ENCODE measurements at regions of chr17 and their contacts with region 1.

Region 1: GRCh38 chr17:19447085-19447583 is 36.1 kb downstream of the RNF112 start:
- DNase-seq: peak; percentile 66
- ATAC-seq: peak; percentile 72
- H3K4me3 ChIP-seq: no peak overlapping the region
- H3K27ac ChIP-seq: no peak overlapping the region
- H3K4me1 ChIP-seq: peaks cover 23% of the 10 kb centered on the region
- H3K27me3 ChIP-seq: peaks cover 0 to 1% of the 10 kb centered on the region in 2 experiments; a peak in 3 of 5 replicates
- CTCF ChIP-seq: peak; percentile 84
- EP300 ChIP-seq: peak in 1 of 2 experiments; percentile 40; a peak in 1 of 4 replicates
- POLR2A ChIP-seq: no peak
- RAD21 ChIP-seq: peak; percentile 79

Region 2: DNA sequence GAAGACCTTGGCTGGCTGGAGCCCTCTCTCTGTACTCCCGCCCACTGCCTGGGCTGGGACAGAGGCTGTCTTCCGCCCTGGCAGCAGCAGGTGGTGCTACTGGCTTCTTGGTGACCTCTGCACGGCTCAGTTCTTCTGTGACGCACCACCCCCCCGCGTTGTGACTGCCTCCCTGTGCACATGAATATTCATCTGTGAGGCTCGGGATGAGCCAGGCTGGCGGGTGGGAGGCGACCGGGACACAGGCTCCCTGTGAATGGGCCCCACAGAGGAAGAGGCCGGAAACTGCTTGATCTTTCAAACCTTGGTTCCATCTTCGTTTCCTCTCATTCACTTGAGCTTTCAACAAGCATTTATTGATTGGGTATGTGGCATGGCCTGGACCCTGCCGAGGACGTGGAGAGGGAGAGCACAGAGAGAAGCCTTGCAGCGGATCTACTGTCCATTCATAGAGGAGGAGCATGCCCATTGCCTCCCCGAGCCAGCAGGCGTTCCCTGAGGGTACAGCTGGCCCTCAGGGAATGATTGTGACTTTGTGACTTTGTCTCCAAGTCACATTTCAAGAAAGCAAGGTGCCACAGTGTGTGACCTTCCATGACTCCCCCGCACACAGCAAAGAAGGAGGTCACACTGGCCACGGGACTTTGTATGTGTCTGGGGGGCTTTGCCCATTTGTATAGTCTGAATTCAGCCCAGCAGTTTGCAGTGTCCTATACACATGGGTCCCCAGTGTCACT is 129.6 kb before region 1 on chr17:
- CTCF ChIA-PET with region 1: interaction called, 7 read pairs
- POLR2A ChIA-PET with region 1: no interaction called
- in situ Hi-C with region 1: no loop called
- intact Hi-C with region 1: loop called (anchors 5 kb)
- DNase-seq: peak; percentile 89
- ATAC-seq: peak; percentile 98
- H3K4me3 ChIP-seq: peak overlapping the region in 1 of 3 experiments; percentile 35; a peak in 2 of 6 replicates
- H3K27ac ChIP-seq: peak overlapping the region; percentile 75
- H3K4me1 ChIP-seq: peaks cover 19% of the 10 kb centered on the region
- H3K27me3 ChIP-seq: no peaks in the 10 kb centered on the region
- CTCF ChIP-seq: peak; percentile 97
- EP300 ChIP-seq: no peak
- POLR2A ChIP-seq: peak; percentile 34 to 36; a peak in 1 of 4 replicates
- RAD21 ChIP-seq: peak; percentile 95

Region 3: DNA sequence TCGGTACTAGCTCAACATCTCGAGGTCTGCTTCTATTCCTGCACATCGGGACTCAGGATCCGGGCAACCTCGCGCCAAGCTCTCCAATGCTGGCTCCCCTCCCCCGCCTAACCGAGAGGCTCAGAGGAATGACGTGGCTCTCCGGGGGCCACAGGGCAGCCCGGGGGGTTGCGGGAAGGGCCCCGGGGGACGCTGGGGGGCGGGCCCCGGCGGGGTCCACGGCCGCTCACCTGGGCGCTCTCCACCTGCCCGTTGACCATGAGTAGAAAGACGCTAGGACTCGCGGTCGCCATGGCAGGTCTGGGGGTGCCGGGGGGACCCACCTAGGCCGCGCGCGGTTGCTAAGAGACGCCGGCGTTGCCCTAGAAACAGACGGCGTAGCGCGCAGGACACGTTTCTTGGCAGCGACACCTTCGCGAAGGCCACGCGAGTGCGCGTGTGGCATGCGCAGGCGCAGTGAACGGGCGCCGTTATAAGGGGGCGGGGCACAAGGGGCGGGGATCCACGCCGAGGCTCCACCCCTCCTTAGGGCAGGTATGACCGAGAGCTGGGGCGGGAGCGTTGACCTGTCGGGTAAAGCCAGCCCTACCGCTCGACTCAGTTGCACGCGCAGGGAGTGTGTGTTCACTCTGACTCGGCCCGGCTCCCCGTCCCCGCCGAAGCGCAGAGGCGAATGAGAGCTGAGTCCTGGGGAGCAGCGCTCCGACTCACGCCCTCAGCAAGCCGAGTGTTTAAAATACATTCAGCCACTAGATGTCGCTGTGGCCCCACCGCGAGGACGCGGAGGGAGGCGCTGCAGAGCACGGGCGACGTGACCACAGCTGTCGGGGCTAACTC is 84.6 kb before region 1 on chr17 and contains the start of gene B9D1:
- CTCF ChIA-PET with region 1: interaction called, 57 read pairs
- POLR2A ChIA-PET with region 1: interaction called, 10 read pairs
- in situ Hi-C with region 1: loop called (anchors 5 kb)
- intact Hi-C with region 1: loop called (anchors 1 kb)
- DNase-seq: peak; percentile 77
- ATAC-seq: peak; percentile 74
- H3K4me3 ChIP-seq: peak within 1 kb of the TSS; percentile 65 to 93 (median 74)
- H3K27ac ChIP-seq: peak within 1 kb of the TSS; percentile 74
- H3K4me1 ChIP-seq: peaks cover 58% of the 10 kb centered on the region
- H3K27me3 ChIP-seq: no peaks in the 10 kb centered on the region
- CTCF ChIP-seq: peak; percentile 100
- EP300 ChIP-seq: no peak; a peak in 1 of 4 replicates
- POLR2A ChIP-seq: peak in 1 of 2 experiments; percentile 72; a peak in 3 of 4 replicates
- RAD21 ChIP-seq: peak; percentile 99
- total RNA-seq, gene B9D1: 26.2 and 27.7 TPM in 2 replicates

Region 4: GRCh38 chr17:19384701-19385411 is 62.3 kb before region 1 on chr17:
- CTCF ChIA-PET with region 1: no interaction called
- POLR2A ChIA-PET with region 1: no interaction called
- in situ Hi-C with region 1: no loop called
- intact Hi-C with region 1: no loop called
- DNase-seq: no peak
- ATAC-seq: no peak
- H3K4me3 ChIP-seq: no peak overlapping the region
- H3K27ac ChIP-seq: no peak overlapping the region
- H3K4me1 ChIP-seq: peaks cover 41% of the 10 kb centered on the region
- H3K27me3 ChIP-seq: 0 out of 5 replicates have a peak, but pooled peaks cover 0 to 10% of the 10 kb centered on the region in 2 experiments
- CTCF ChIP-seq: no peak
- EP300 ChIP-seq: no peak
- POLR2A ChIP-seq: no peak
- RAD21 ChIP-seq: no peak

Region 5: GRCh38 chr17:19397556-19398041 is 49.5 kb before region 1 on chr17:
- CTCF ChIA-PET with region 1: interaction called, 5 read pairs
- POLR2A ChIA-PET with region 1: no interaction called
- in situ Hi-C with region 1: no loop called
- intact Hi-C with region 1: loop called (anchors 1 kb)
- DNase-seq: peak; percentile 49
- ATAC-seq: peak; percentile 85
- H3K4me3 ChIP-seq: no peak overlapping the region
- H3K27ac ChIP-seq: no peak overlapping the region
- H3K4me1 ChIP-seq: peaks cover 20% of the 10 kb centered on the region
- H3K27me3 ChIP-seq: peaks cover 0 to under 1% of the 10 kb centered on the region in 2 experiments; a peak in 1 of 5 replicates
- CTCF ChIP-seq: peak; percentile 73
- EP300 ChIP-seq: no peak
- POLR2A ChIP-seq: no peak
- RAD21 ChIP-seq: peak; percentile 44

Measured in HepG2 (cell line).